ENCODE measurements at regions of chrX and their contacts with region 1.

Region 1: GRCh38 chrX:103214870-103215424 is at the start of gene BEX4:
- DNase-seq: peak; percentile 94
- H3K4me3 Mint-ChIP-seq: peak within 1 kb of the TSS; percentile 86
- H3K27ac Mint-ChIP-seq: peak within 1 kb of the TSS; percentile 85
- H3K4me1 Mint-ChIP-seq: peaks cover 5% of the 10 kb centered on the region
- H3K27me3 Mint-ChIP-seq: peaks cover 9% of the 10 kb centered on the region
- total RNA-seq, gene BEX4: 4.2 and 5.9 TPM in 2 replicates

Region 2: DNA sequence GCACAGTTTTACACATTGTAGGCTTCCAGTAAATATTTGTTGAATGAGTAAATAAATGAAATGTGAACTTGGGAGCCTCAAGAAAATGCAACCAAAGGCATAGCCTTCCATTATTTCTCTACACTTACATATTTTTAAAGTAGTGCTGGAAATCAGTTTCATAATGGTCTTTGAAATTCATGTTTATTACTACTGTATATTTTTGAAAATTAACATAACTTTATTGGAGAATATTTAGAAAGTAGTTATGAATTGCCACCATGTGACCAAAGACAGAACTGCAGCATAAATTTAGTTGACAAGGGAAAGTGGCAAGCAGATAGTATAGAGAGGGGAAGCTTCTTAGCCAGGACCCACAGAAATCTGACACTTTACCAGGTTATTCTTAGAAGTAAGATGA is 33.6 kb after region 1 on chrX:
- intact Hi-C with region 1: loop called (anchors 1 kb)
- DNase-seq: peak; percentile 61
- H3K4me3 Mint-ChIP-seq: no peak overlapping the region
- H3K27ac Mint-ChIP-seq: no peak overlapping the region
- H3K4me1 Mint-ChIP-seq: peaks cover 4% of the 10 kb centered on the region
- H3K27me3 Mint-ChIP-seq: peaks cover 4% of the 10 kb centered on the region

Region 3: DNA sequence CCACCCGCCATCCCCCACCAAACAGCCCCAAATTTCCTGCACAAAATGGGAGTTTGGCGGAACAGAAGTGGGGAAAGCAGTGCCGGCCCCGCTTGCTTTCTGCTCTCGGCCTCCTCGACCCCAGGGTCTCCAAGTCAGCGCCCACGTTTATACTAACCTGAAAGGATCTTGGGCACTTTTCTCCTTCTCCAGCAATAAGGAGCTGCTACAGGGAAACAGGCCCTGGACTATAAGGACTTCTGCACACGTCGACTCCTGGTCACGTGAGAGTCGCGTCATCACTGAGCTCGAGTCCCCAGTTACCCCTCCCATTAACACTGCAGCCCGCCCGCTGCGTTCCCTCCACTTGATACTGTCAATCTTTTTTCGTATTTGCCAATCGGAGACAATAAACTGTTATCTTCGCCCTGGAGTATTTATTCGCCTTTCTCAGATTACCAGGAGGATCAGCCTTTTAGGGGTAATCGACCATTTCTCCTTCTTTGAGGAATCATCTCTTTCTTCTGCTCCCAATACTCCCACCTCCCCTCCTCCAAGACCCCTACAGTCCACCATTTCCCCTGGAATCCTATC is 40.1 kb after region 1 on chrX and contains the start of gene TCEAL8:
- intact Hi-C with region 1: loop called (anchors 2 kb)
- DNase-seq: peak; percentile 86
- H3K4me3 Mint-ChIP-seq: peak within 1 kb of the TSS; percentile 98
- H3K27ac Mint-ChIP-seq: peak within 1 kb of the TSS; percentile 96
- H3K4me1 Mint-ChIP-seq: peaks cover 14% of the 10 kb centered on the region
- H3K27me3 Mint-ChIP-seq: peaks cover 6% of the 10 kb centered on the region
- total RNA-seq, gene TCEAL8: 22.1 and 23.5 TPM in 2 replicates

Region 4: GRCh38 chrX:103310542-103311398 is 95.8 kb after region 1 on chrX and contains the start of gene BEX2:
- intact Hi-C with region 1: loop called (anchors 10 kb)
- DNase-seq: peak; percentile 93
- H3K4me3 Mint-ChIP-seq: peak within 1 kb of the TSS; percentile 77
- H3K27ac Mint-ChIP-seq: peak within 1 kb of the TSS; percentile 56
- H3K4me1 Mint-ChIP-seq: no peaks in the 10 kb centered on the region
- H3K27me3 Mint-ChIP-seq: peaks cover 2% of the 10 kb centered on the region
- total RNA-seq, gene BEX2: 3.4 and 3.6 TPM in 2 replicates

Region 5: GRCh38 chrX:103464774-103465117 is 249.8 kb after region 1 on chrX:
- intact Hi-C with region 1: loop called (anchors 1 kb)
- DNase-seq: peak; percentile 92
- H3K4me3 Mint-ChIP-seq: peak overlapping the region; percentile 92
- H3K27ac Mint-ChIP-seq: no peak overlapping the region
- H3K4me1 Mint-ChIP-seq: peaks cover 8% of the 10 kb centered on the region
- H3K27me3 Mint-ChIP-seq: no peaks in the 10 kb centered on the region